A549 (cell line): ENCODE measurements at regions of chr7 and their contacts with region 1.

Region 1: GRCh38 chr7:1137510-1138167 is 22.4 kb downstream of the ZFAND2A start:
- DNase-seq: peak in 1 of 2 experiments; percentile 16
- ATAC-seq: peak; percentile 84 to 90
- H3K4me3 ChIP-seq: peak overlapping the region; percentile 70
- H3K27ac ChIP-seq: peak overlapping the region; percentile 84 to 97
- H3K4me1 ChIP-seq: peaks cover 8% of the 10 kb centered on the region; the same call in 2 of the 3 replicates
- CTCF ChIP-seq: no peak; the same call in 2 of the 3 replicates
- EP300 ChIP-seq: no peak
- POLR2A ChIP-seq: peak; percentile 31
- RAD21 ChIP-seq: no peak

Region 2: DNA sequence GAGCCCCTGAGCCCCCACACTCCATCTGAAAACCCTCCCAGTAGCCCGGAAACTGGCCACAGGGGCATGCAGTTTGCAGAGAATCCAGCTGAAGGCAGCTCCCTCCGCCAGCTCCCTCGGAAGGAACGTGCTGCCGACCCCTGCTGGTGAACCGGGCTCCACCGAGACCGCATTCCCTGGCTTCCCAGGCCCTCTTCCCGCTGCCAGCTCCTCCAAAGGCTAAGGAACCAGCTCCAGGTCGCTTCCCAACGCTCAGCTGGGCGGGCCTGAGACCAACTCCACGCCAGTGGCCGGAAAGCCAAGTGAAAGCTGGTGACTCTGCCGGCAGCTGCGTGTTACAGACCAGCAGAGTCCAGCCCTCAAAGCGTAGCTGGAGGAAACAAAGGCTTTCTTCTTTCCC is 13.9 kb before region 1 on chr7:
- CTCF ChIA-PET with region 1: interaction called, 12 read pairs
- POLR2A ChIA-PET with region 1: interaction called, 9 read pairs
- DNase-seq: peak; percentile 12 to 53
- ATAC-seq: peak in 1 of 2 experiments; percentile 90; a peak in 3 of 6 replicates
- H3K4me3 ChIP-seq: no peak overlapping the region
- H3K27ac ChIP-seq: no peak overlapping the region
- H3K4me1 ChIP-seq: no peaks in the 10 kb centered on the region
- CTCF ChIP-seq: 0 out of 3 replicates have a peak, but pooled peaks have one; percentile 5
- EP300 ChIP-seq: no peak
- POLR2A ChIP-seq: no peak
- RAD21 ChIP-seq: no peak

Region 3: DNA sequence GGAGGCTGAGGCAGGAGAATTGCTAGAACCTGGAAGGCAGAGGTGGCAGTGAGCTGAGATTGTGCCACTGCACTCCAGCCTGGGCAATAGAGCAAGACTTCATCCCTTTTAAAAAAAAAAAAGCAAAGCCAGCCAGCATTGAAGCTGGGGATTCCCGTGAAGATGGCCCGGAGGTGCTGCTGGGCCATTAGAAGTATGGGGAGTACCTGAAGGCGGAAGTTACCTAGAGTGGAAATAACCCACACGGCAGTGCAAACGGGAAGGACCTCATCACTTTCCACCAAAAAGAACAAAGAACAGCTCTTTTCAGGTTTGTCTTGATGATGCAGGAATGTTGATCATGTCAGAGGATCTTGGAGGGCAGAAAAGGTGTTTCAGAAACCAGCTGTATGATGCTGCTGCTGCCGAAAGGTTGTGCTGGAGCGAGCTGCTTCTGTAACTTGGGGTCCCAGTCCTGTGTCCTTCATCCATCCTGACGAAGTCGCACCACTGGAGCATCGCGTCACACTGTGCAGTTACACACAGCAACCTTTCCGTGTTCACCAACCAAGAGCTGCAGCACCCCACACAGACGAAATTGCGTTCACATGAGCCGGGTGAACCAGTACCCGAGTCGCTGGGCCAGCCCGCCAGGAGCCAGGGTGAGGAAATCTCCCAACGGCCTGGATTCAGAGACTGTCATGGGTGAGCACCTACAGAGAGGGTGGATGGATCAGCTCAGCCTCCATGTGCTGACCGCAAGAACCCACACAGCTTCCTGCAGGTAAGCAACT is 14.2 kb after region 1 on chr7:
- CTCF ChIA-PET with region 1: interaction called, 13 read pairs
- POLR2A ChIA-PET with region 1: interaction called, 17 read pairs
- DNase-seq: no peak
- ATAC-seq: no peak
- H3K4me3 ChIP-seq: no peak overlapping the region
- H3K27ac ChIP-seq: no peak overlapping the region
- H3K4me1 ChIP-seq: peaks cover 16% of the 10 kb centered on the region
- CTCF ChIP-seq: no peak
- EP300 ChIP-seq: no peak
- POLR2A ChIP-seq: no peak
- RAD21 ChIP-seq: no peak

Region 4: DNA sequence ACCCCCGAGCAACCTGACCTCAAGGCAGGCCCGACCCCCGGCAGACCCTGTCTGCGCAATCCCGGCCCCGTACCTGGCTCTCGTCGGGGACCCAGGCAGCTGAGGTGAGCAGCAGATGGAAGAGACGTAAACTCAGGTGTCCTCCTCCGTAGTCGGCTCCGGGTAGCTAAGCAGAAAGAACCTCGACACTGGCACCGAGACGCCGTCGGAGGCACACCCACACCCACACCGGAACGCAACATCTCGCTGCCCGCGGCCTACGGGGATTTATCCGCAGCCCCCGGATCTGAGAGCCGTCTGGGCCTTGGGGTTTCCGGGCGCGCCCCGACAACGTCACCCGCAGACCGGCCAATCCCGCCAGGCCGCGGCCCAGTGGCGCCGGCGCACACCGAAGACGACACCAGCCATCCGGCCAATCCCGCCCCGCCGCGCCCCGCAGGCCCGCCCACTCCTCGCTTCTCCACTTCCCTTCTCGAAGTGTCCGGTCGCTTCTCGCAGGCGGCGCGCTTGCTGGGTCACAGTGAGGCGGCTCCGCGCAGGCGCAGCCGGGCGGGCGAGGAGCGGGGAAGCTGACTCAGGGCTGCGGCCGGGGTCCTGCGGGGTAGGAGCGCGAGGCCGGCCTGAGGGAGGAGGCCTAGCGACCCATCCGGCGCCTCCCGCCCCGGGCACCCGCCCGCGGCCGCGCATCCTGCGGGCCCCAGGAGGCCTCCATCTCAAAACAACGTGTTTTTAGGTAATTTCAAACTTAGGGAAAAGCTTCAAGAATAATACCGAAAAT is 22.4 kb after region 1 on chr7 and contains the start of gene ZFAND2A:
- CTCF ChIA-PET with region 1: interaction called, 11 read pairs
- POLR2A ChIA-PET with region 1: interaction called, 17 read pairs
- DNase-seq: peak; percentile 97 to 98
- ATAC-seq: peak; percentile 90 to 92
- H3K4me3 ChIP-seq: peak within 1 kb of the TSS; percentile 72
- H3K27ac ChIP-seq: peak within 1 kb of the TSS; percentile 94 to 98
- H3K4me1 ChIP-seq: peaks cover 42% of the 10 kb centered on the region
- CTCF ChIP-seq: no peak
- EP300 ChIP-seq: no peak
- POLR2A ChIP-seq: peak; percentile 57
- RAD21 ChIP-seq: no peak
- polyA plus RNA-seq, gene ZFAND2A: 88.6 and 105 TPM in 2 replicates